Breast epithelium (tissue), 4 donors: ENCODE measurements at regions of chrX and their contacts with region 1.

Region 1: DNA sequence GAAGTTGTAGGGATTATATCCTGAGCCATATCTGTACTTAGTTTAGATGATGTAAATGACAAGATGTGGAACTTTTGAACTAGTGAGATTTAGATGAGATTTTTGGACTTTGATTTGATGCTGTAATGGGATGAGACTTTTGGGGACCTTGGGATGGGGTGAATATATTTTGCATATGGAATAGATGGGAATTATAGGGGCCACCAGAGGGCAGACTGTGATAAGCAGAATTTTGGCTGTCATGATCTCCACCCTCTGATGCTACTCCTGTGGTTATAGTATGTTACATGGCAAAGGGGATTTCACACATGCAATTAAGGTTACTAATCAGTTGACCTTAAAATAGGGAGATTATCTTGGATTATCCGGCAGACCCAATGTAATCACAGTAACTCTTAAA is 214.0 kb upstream of the NHS start:
- DNase-seq: no peak
- H3K4me3 ChIP-seq: no peak overlapping the region
- H3K27ac ChIP-seq: no peak overlapping the region
- H3K4me1 ChIP-seq: no peaks in the 10 kb centered on the region
- H3K27me3 ChIP-seq: no peaks in the 10 kb centered on the region
- CTCF ChIP-seq: no peak
- POLR2A ChIP-seq: no peak

Region 2: GRCh38 chrX:17237146-17237545 is 76.2 kb after region 1 on chrX:
- intact Hi-C with region 1: loop called (anchors 5 kb)
- DNase-seq: no peak
- H3K4me3 ChIP-seq: no peak overlapping the region
- H3K27ac ChIP-seq: no peak overlapping the region
- H3K4me1 ChIP-seq: no peaks in the 10 kb centered on the region
- H3K27me3 ChIP-seq: peaks cover 0 to 32% of the 10 kb centered on the region in 2 donors
- CTCF ChIP-seq: no peak
- POLR2A ChIP-seq: no peak